Dorsolateral prefrontal cortex (tissue), 120 donors: ENCODE measurements at regions of chr16 and their contacts with region 1.

Region 1: GRCh38 chr16:15765880-15766279 is 90.9 kb downstream of the MYH11 start:
- DNase-seq: peak in 3 of 10 donors; percentile 4 to 34 (median 29)
- H3K4me3 ChIP-seq: no peak overlapping the region
- H3K27ac ChIP-seq: no peak overlapping the region
- H3K27me3 ChIP-seq: peaks cover 0 to 4% (median 0%) of the 10 kb centered on the region in 45 donors
- CTCF ChIP-seq: peak; percentile 34 to 79 (median 64)

Region 2: DNA sequence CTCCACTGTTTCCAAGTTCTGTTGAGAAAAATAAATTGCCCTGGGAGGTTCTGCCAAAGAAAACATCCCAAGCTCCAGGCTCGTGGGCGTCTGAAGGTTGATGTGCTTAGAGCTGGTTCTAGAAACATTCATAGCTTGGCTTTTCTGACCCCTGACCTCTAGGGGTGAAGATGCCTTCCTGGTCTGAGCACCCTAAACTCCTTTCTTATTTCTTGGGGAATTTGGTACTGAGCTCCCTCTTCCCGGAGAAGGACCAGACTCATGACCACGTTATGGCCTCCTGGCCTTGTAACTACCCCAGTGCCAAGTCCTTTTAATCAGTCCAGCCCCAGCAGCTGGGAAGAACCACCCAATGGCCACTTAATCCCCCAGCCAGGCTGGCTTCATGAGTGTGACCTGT is 24.6 kb after region 1 on chr16:
- intact Hi-C with region 1: no loop called
- DNase-seq: no peak
- H3K4me3 ChIP-seq: no peak overlapping the region
- H3K27ac ChIP-seq: no peak overlapping the region
- H3K27me3 ChIP-seq: no peaks in the 10 kb centered on the region
- CTCF ChIP-seq: no peak

Region 3: GRCh38 chr16:16120382-16121184 is 354.7 kb after region 1 on chr16:
- intact Hi-C with region 1: loop called (anchors 5 kb)
- DNase-seq: peak; percentile 48 to 89 (median 80)
- H3K4me3 ChIP-seq: peak overlapping the region in 22 of 59 donors; percentile 2 to 44 (median 18)
- H3K27ac ChIP-seq: peak overlapping the region in 20 of 59 donors; percentile 3 to 68 (median 42)
- H3K27me3 ChIP-seq: no peaks in the 10 kb centered on the region
- CTCF ChIP-seq: no peak

Region 4: GRCh38 chr16:16127469-16128116 is 361.7 kb after region 1 on chr16:
- intact Hi-C with region 1: loop called (anchors 5 kb)
- DNase-seq: peak; percentile 51 to 77 (median 63)
- H3K4me3 ChIP-seq: no peak overlapping the region
- H3K27ac ChIP-seq: no peak overlapping the region
- H3K27me3 ChIP-seq: no peaks in the 10 kb centered on the region
- CTCF ChIP-seq: peak; percentile 57 to 87 (median 80)

Region 5: GRCh38 chr16:16150117-16150877 is 384.4 kb after region 1 on chr16:
- intact Hi-C with region 1: no loop called
- DNase-seq: peak; percentile 26 to 93 (median 86)
- H3K4me3 ChIP-seq: peak overlapping the region in 6 of 59 donors; percentile 4 to 26 (median 15)
- H3K27ac ChIP-seq: peak overlapping the region in 7 of 59 donors; percentile 4 to 57 (median 28)
- H3K27me3 ChIP-seq: peaks cover 0 to 18% (median 0%) of the 10 kb centered on the region in 45 donors
- CTCF ChIP-seq: peak in 10 of 56 donors; percentile 3 to 27 (median 14)

Region 6: GRCh38 chr16:16191493-16192167 is 425.8 kb after region 1 on chr16:
- intact Hi-C with region 1: loop called in 1 of 2 experiments (anchors 5 kb)
- DNase-seq: no peak
- H3K4me3 ChIP-seq: no peak overlapping the region
- H3K27ac ChIP-seq: no peak overlapping the region
- H3K27me3 ChIP-seq: peaks cover 0 to 7% (median 0%) of the 10 kb centered on the region in 45 donors
- CTCF ChIP-seq: no peak